ENCODE measurements at regions of chr1 and their contacts with region 1.

Region 1: DNA sequence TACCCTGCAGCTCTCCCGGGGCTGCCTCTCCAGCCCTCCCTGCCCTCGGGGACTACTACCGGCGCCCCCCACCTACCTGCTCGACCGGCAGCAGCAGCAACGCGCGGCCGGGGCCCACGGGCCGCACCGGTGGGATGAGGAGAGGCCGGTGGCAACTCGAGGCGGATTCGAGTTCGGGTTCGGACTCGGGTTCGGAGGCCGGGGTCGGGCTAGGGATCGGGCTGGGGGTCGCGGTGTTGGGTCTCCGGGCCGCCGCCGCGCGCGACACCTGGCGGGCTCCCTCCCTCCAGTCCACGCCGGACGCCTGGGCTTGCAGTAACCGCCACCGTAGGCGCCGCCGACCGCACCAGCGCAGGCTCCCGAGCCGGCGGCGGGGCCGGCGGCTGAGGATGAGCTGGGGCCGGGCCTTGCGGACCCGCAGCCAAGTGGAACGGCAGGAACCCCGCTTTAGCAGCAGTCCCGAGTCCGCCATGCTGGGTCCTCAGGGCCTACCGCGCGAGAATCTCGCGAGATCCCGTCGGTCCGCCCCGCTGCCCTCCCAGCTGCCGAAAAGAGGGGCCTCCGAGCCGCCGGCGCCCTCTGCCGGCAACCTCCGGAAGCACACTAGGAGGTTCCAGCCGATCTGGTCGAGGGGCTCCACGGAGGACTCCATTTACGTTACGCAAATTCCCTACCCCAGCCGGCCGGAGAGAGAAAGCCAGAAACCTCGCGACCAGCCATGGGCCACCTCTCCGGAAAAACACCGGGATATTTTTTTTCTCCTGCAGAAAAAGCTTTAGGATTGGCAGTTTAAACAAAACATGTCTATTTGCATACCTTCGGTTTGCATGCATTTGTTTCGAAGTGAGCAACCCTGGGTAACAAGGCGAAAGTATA is at the start of gene NOL9:
- DNase-seq: peak; percentile 90
- H3K4me3 Mint-ChIP-seq: peak within 1 kb of the TSS; percentile 62
- H3K27ac Mint-ChIP-seq: no peak within 1 kb of the TSS
- H3K4me1 Mint-ChIP-seq: peaks cover 7% of the 10 kb centered on the region
- H3K27me3 Mint-ChIP-seq: no peaks in the 10 kb centered on the region
- CTCF ChIP-seq: peak; percentile 81
- total RNA-seq, gene NOL9: 27.2 and 30.4 TPM in 2 replicates

Region 2: DNA sequence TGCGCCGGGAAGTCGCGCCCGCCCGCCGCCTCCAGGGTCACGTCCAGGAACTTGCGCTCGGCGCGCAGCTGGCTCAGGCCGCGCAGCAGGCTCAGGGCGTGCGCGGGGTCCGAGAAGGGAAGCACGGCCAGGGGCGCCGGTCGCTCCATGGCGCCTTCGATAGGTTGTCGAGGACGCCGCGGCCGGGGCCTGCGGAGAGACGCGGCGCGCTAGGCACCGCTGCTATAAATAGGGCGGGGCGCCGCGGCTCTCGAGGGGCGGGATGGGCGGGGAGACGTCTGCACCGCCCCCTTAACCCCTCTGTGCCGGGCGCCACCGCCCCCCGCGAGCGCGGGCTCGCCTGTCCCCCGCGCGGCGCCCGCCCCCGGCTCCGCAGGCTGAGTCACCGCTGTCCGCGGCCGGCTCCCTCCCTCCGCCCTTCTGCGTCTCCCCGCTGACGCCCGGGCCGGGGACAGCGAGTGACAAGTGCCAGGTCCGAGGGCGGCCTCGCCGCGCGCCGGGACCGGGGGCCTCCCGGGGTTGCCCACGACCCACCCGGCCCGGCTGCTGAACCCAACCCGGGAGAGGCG is 48.5 kb after region 1 on chr1 and contains the start of gene KLHL21:
- CTCF ChIA-PET with region 1: no interaction called
- intact Hi-C with region 1: loop called (anchors 10 kb)
- DNase-seq: peak; percentile 87
- H3K4me3 Mint-ChIP-seq: peak within 1 kb of the TSS; percentile 87
- H3K27ac Mint-ChIP-seq: peak within 1 kb of the TSS; percentile 68
- H3K4me1 Mint-ChIP-seq: no peaks in the 10 kb centered on the region
- H3K27me3 Mint-ChIP-seq: no peaks in the 10 kb centered on the region
- CTCF ChIP-seq: no peak
- total RNA-seq, gene KLHL21: 21.8 and 23.5 TPM in 2 replicates

Region 3: DNA sequence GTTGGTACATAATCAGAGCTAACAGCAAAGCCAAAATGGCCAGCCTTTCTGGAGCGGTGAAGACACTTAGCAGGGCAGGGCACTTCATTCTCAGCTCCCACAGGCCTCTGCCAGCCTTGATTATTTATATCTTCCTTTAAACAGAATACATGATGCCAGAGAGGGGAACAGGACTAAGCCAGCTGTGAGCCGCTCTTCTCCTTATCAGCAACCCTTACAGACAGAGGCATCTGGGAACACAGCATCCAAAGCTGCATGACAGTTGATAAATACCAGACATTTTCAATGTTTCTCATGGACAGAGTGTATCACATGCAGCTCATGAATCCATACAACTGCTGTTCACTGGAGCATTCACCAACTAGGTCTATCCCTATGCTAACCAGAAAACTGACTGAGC is 118.3 kb after region 1 on chr1:
- CTCF ChIA-PET with region 1: no interaction called
- intact Hi-C with region 1: no loop called
- DNase-seq: no peak
- H3K4me3 Mint-ChIP-seq: no peak overlapping the region
- H3K27ac Mint-ChIP-seq: no peak overlapping the region
- H3K4me1 Mint-ChIP-seq: no peaks in the 10 kb centered on the region
- H3K27me3 Mint-ChIP-seq: no peaks in the 10 kb centered on the region
- CTCF ChIP-seq: no peak